AG04449 (cell line): ENCODE measurements at regions of chr19 and their contacts with region 1.

Region 1: GRCh38 chr19:16041299-16041990 is 34.9 kb upstream of the TPM4 start:
- DNase-seq: peak; percentile 12
- H3K4me3 ChIP-seq: peak overlapping the region; percentile 12
- CTCF ChIP-seq: peak; percentile 93

Region 2: DNA sequence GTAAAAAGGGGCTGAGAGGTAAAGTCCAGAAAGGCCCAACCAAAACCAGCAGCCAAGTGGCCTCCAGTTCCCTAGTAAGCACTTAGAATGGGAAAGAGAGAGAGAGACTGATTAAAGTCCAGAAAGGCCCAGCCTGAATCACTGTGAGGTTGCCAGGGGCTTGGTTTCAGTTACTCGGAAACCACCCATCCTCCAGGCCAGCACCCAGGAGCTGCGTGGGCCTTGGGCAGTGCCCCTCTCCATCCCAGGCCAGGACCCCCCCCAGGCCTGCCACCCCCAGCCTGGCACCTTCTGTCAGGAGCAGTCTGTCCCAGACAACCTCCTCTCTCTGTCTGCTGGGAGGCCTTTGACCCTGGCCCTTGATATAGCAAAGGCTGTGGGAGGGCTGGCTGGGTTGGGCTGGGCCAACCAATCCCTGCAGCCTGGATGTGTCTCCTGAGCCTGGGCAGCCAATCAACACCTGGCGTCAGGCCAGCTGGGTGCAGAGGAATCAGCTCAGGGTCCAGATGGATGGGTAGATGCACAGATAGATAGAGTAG is 143.6 kb before region 1 on chr19 and contains the start of gene CYP4F2:
- CTCF ChIA-PET with region 1: no interaction called
- POLR2A ChIA-PET with region 1: no interaction called
- DNase-seq: no peak
- H3K4me3 ChIP-seq: no peak within 1 kb of the TSS
- CTCF ChIP-seq: no peak

Region 3: DNA sequence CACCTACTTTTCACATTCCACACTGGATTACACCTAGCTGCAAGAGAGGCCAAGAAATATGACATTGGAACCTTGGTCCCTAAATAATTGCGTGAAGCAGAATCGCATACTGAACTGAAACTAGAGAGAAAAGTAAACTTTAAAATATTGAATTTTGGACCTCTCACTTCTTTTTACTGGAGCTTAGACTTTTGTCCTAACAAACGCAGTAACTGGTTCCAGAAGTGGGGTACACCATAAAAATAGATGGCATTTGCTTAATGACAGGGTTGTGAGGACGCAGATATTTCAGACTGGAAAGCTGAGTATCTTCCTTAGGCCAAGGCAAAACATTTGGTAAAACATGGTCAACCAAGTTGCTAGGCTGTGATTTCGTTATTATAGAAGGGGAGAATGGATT is 15.6 kb after region 1 on chr19:
- CTCF ChIA-PET with region 1: interaction called, 32 read pairs
- POLR2A ChIA-PET with region 1: no interaction called
- DNase-seq: no peak
- H3K4me3 ChIP-seq: no peak overlapping the region
- CTCF ChIP-seq: no peak

Region 4: DNA sequence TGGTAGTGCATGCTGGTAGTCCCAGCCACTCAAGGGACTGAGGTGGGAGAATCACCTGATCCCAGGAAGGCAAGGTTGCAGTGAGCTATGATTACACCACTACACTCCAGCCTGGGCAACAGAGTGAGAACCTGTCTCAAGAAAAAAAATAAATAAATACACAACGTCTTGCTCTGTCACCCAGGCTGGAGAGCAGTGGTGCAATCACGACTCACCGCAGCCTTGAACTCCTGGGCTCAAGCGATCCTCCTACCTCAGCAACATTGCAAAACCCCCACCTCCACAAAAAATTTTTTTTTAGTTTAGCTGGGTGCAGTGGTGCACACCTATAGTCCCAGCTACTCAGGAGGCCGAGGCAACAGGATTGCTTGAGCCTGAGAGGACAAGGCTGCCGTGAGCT is 43.7 kb after region 1 on chr19:
- CTCF ChIA-PET with region 1: interaction called, 16 read pairs
- POLR2A ChIA-PET with region 1: interaction called, 3 read pairs
- DNase-seq: no peak
- H3K4me3 ChIP-seq: no peak overlapping the region
- CTCF ChIP-seq: no peak

Region 5: DNA sequence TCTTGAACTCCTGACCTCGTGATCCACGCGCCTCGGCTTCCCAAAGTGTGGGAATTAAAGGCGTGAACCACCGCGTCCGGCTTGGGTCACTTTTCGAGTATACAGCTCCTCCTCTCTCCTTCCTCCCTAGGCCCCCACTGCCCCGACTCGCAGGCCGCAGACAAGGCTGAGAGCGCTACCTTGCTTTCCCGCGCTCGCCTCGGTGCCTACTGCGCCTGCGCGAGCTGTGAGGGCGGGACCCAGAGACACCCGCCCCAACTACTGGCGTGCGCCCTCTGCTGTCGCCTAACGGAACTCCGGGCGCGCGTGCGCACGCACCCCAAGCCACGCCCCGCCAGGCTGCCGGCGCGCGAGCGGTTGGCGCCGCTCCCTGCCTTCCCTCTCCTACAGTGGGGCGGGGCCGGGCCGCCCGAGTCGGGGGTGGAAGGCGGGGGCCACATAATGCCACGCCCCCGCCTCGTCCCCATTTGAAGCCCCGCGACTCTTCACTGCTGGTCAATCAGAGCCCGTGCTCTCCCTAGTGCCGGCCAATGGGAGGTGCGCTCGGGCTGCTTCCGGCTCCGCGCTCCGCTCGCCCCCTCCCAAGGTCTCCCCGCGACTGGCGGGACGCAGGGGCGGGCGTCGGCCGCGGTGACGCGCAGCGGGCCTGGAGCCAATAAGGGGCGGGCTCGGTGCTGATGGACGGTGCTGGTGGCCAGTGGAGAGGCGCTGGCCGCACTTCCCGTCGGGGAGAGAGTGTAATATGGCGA is 69.9 kb after region 1 on chr19 and contains the start of gene RAB8A:
- CTCF ChIA-PET with region 1: interaction called, 46 read pairs
- POLR2A ChIA-PET with region 1: interaction called, 4 read pairs
- DNase-seq: peak; percentile 93
- H3K4me3 ChIP-seq: peak within 1 kb of the TSS; percentile 92
- CTCF ChIP-seq: peak; percentile 90

Region 6: GRCh38 chr19:16197622-16198369 is 156.4 kb after region 1 on chr19 and contains the start of gene AP1M1:
- CTCF ChIA-PET with region 1: interaction called, 11 read pairs
- POLR2A ChIA-PET with region 1: no interaction called
- DNase-seq: peak; percentile 75
- H3K4me3 ChIP-seq: peak within 1 kb of the TSS; percentile 97
- CTCF ChIP-seq: no peak